GM13976 (cell line): ENCODE measurements at regions of chr6 and their contacts with region 1.

Region 1: DNA sequence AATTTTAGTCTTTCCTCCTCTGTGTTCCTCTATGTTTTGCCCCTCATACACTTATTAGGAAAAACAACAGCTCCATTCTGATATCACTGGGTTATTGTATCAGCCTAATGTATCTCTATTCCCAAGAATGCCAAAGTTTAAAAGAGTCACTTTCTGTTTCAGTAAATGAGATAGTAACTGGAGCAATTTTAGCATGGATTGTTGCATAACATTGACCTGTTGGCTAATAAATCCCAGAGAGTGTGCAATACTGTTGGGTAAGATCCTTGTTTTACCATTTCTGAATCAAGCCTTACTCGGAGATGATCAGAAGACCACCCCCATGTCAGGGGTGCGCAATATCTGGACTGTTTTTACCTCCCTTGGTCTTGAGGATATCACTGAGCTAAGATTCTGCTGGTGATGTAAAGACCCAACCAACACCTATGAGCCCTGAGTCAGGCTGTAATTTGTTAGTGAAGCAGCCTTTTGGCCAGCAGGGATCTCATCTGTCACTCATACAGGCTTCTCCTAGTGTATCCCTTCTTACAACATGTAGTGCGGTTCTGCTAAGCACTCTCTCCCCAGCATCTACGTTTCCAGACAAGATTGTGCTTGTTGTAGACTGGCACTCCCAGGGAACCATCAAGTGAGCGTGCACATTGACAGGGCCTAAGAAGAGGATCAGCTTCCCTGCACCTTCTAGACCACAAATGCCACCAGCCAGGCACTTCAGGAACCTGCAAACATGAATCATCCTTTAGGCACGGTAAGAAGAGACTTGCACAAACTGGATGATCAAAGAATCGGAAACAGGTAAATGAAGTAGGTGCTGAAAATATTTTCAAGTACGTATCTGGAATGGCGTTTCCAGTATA is 11.5 kb upstream of the IPCEF1 start:
- DNase-seq: no peak
- CTCF ChIP-seq: no peak

Region 2: DNA sequence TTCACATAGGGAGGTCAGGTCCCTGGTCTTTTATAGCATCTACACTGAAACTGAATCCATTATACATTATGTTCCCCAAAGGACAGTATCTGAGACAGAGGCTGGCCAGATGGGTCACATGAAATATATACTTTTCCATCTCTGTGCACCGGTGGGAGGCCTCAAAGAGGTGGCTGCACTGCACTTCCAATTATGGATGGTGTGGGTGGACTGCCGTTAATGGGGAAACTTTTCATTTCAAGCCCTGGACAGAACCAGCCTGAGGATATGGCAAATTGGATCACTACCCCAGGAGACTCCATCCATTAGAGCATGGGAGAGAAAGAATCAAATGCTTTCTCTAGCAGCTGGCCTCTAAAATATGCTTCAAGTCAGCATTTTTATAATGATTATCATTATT is 609.6 kb before region 1 on chr6:
- in situ Hi-C with region 1: no loop called
- DNase-seq: no peak
- CTCF ChIP-seq: no peak

Region 3: DNA sequence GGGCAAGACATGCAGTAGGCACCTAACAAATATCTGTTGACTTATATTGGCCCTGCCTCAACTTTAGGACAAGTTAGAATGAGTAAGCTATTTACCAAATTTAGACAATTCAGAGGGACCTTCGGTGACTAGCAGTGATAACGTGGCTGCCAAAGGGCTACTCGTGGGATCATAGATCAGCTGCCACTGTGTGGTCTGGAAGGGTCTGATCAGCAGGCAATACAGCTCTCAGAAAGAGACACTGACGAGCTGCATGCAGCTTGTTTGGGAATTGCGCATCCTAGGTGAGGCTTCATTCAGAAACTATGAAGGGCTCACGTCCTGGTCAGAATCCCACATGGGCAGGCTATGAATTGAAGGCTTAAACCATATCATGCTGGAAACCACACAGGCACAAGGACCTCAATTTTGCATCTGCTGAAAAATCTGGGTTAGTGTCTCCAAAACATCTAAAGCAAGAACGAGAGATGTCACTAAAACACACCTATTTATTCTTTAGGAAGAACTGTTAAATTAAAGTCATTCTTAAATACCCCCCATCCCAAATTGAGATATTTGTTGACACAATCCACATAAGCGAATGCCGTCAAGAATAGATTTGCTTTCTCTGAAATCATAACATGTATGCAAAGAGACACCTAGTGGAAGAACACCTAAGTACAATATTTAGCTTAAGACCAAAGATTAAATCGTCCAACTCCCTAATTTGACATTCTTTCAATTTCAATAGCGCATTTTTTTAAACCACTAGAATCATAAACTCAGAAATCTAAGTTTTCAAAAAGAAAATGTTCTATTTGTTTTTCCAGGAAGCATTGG is 91.0 kb before region 1 on chr6:
- in situ Hi-C with region 1: loop called (anchors 10 kb)
- DNase-seq: peak; percentile 55
- CTCF ChIP-seq: peak; percentile 38

Region 4: DNA sequence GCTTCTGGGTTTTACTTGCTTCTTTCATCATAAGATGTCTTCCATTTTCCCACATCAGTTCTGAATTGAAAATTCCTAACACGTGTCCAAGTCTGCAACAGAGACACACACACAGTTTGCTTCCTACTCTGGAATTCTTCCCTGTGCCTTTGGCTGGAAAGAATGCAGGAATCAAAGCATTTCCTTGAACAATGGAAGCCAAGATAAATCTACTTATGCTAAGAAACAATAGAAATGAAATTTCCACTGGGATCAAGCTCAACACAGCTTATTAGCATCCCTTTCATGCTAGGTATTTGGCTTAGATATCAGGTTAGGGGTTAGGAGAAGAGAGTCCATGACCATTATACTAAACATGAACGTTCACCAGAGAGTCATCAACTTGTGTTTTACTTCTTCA is 264.1 kb after region 1 on chr6:
- in situ Hi-C with region 1: no loop called
- DNase-seq: no peak
- CTCF ChIP-seq: no peak